ENCODE measurements at regions of chr6 and their contacts with region 1.

Region 1: DNA sequence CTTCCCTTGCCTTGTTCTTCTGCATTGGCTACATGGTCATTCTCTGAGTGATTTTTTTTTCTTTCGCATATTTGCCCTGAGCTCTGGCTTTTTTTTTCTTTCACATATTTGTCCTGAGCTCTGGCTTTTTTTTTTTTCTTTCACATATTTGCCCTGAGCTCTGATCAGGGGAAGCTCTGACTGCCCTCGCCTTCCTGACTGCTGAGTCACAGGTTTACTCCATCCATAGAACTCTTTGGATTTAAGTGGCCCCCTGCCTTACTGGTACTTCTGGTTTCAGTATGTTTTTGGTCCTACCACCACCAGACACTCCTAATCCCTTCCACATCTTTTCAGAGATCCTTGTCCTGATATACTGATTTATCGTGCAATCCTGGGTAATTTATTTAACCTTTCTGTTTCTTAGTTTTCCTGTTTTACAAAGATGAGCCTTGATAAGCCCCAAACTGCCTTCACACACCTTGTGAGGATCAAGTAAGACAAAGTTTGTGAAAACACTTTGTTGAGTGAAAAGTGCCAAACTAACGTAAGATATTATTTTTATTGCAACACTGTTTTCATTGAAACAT is 201.2 kb downstream of the OGFRL1 start:
- DNase-seq: peak; percentile 90
- H3K4me3 ChIP-seq: peak overlapping the region in 1 of 3 experiments; percentile 33
- H3K27ac ChIP-seq: peak overlapping the region; percentile 85
- H3K4me1 ChIP-seq: peaks cover 17% of the 10 kb centered on the region
- H3K27me3 ChIP-seq: no peaks in the 10 kb centered on the region
- CTCF ChIP-seq: no peak
- POLR2A ChIP-seq: no peak

Region 2: GRCh38 chr6:71420693-71421328 is 69.0 kb before region 1 on chr6:
- CTCF ChIA-PET with region 1: interaction called, 11 read pairs
- POLR2A ChIA-PET with region 1: no interaction called
- dilution Hi-C with region 1: no loop called
- intact Hi-C with region 1: no loop called
- DNase-seq: peak; percentile 97
- H3K4me3 ChIP-seq: peak overlapping the region; percentile 65 to 97 (median 93)
- H3K27ac ChIP-seq: peak overlapping the region; percentile 71
- H3K4me1 ChIP-seq: peaks cover 18% of the 10 kb centered on the region
- H3K27me3 ChIP-seq: no peaks in the 10 kb centered on the region
- CTCF ChIP-seq: no peak
- POLR2A ChIP-seq: peak; percentile 89

Region 3: DNA sequence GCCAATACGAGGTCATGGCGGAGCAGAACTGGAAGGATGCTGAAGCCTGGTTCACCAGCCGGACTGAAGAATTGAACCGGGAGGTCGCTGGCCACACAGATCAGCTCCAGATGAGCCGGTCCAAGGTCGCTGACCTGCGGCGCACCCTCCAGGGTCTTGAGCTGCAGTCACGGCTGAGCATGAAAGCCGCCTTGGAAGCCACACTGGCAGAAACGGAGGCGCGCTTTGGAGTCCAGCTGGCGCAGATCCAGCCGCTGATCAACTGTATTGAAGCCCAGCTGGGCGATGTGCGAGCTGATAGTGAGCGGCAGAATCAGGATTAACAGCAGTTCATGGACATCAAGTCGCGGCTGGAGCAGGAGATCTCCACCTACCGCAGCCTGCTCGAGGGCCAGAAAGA is 95.6 kb after region 1 on chr6:
- CTCF ChIA-PET with region 1: no interaction called
- POLR2A ChIA-PET with region 1: no interaction called
- dilution Hi-C with region 1: no loop called
- intact Hi-C with region 1: no loop called
- DNase-seq: no peak
- H3K4me3 ChIP-seq: no peak overlapping the region
- H3K27ac ChIP-seq: no peak overlapping the region
- H3K4me1 ChIP-seq: no peaks in the 10 kb centered on the region
- H3K27me3 ChIP-seq: peaks cover 3 to 8% of the 10 kb centered on the region in 2 experiments
- CTCF ChIP-seq: no peak
- POLR2A ChIP-seq: no peak

Measured in endothelial cell of umbilical vein (primary cell).